Natural killer cell (primary cell): ENCODE measurements at regions of chr14 and their contacts with region 1.

Region 1: GRCh38 chr14:55129428-55130195 is 560 bp downstream of the LGALS3 start:
- DNase-seq: peak; percentile 63 to 71
- ATAC-seq: peak; percentile 74 to 86 (median 82)
- H3K4me3 ChIP-seq: peak overlapping the region; percentile 46
- H3K4me3 Mint-ChIP-seq: peak overlapping the region; percentile 86
- H3K27ac ChIP-seq: peak overlapping the region; percentile 11
- H3K27ac Mint-ChIP-seq: peak overlapping the region; percentile 48 to 81
- H3K4me1 ChIP-seq: peaks cover 33% of the 10 kb centered on the region
- H3K4me1 Mint-ChIP-seq: peaks cover 36 to 53% of the 10 kb centered on the region in 2 donors
- H3K27me3 ChIP-seq: no peaks in the 10 kb centered on the region
- H3K27me3 Mint-ChIP-seq: no peaks in the 10 kb centered on the region
- CTCF ChIP-seq: no peak

Region 2: GRCh38 chr14:55094321-55095157 is 35.1 kb before region 1 on chr14:
- intact Hi-C with region 1: loop called (anchors 5 kb)
- DNase-seq: no peak
- ATAC-seq: no peak
- H3K4me3 ChIP-seq: no peak overlapping the region
- H3K4me3 Mint-ChIP-seq: no peak overlapping the region
- H3K27ac ChIP-seq: no peak overlapping the region
- H3K27ac Mint-ChIP-seq: no peak overlapping the region
- H3K4me1 ChIP-seq: peaks cover 16% of the 10 kb centered on the region
- H3K4me1 Mint-ChIP-seq: peaks cover 9 to 15% of the 10 kb centered on the region in 2 donors
- H3K27me3 ChIP-seq: no peaks in the 10 kb centered on the region
- H3K27me3 Mint-ChIP-seq: no peaks in the 10 kb centered on the region
- CTCF ChIP-seq: no peak

Region 3: DNA sequence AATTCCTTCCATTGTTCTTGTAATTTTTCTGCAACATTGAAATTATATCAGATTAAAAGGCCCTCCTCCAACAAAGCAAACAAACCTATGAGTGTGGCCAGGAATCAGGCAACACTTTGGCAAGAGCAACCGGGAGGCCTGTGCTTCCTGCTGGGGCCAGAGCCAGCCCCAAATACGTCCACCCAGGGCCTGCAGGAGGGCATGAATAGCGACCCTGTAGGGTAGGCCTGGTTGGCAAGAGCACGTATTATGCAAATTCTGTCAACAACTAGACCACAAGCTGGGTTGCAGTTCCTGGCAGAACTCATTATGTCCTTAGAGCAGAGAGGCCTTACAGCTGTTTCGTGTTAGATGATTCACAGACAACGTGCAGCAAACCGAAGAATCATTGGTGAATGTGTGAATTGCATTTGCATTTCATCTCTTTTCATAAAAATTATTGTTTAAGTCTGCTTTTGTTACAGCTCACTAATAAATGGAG is 27.4 kb before region 1 on chr14:
- intact Hi-C with region 1: loop called (anchors 1 kb)
- DNase-seq: peak; percentile 53 to 75
- ATAC-seq: peak; percentile 84 to 89 (median 88)
- H3K4me3 ChIP-seq: no peak overlapping the region
- H3K4me3 Mint-ChIP-seq: peak overlapping the region; percentile 75
- H3K27ac ChIP-seq: peak overlapping the region; percentile 87
- H3K27ac Mint-ChIP-seq: peak overlapping the region; percentile 95 to 99
- H3K4me1 ChIP-seq: peaks cover 46% of the 10 kb centered on the region
- H3K4me1 Mint-ChIP-seq: peaks cover 36 to 42% of the 10 kb centered on the region in 2 donors
- H3K27me3 ChIP-seq: no peaks in the 10 kb centered on the region
- H3K27me3 Mint-ChIP-seq: no peaks in the 10 kb centered on the region
- CTCF ChIP-seq: no peak